ENCODE measurements at regions of chr3 and their contacts with region 1.

Region 1: GRCh38 chr3:141184430-141184829 is 47.2 kb upstream of the PXYLP1 start:
- DNase-seq: no peak
- H3K4me3 ChIP-seq: no peak overlapping the region
- H3K27ac ChIP-seq: no peak overlapping the region
- H3K4me1 ChIP-seq: no peaks in the 10 kb centered on the region
- H3K27me3 ChIP-seq: no peaks in the 10 kb centered on the region
- CTCF ChIP-seq: no peak
- POLR2A ChIP-seq: no peak

Region 2: DNA sequence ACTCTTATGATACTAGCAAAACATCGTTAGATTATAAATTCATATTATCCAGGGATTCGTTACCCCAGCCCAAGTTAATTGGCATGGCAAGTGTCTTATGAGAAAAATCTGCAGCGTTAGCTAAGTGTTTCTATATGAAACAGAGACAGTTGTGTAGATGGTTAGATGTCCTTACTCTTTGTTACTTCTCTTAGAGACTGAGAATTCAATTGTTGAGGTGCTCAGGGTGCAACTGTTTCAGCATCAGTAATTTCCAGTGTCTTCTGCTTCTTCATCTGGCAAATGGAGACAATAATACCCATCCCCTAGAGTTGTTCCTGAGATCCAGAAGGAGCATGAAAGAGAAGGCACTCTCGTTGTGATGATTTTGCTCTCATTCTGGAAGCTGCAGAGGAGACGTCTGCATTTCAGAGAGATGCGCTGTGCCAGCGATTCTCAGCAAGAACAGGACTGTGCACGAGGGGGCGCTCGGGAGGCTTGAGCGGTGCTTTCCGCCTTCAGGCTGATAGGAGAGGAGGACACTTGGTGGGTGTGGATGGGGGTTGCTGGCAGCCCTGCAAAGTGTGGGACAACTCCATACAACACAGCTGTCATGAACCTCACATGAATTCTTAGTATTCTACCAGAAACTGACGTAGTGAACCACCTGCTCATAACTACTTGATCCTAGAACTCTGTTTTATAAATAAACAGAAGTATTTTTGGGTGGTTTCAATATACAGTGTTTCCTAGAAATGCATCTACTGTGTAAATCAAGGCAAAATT is 173.0 kb before region 1 on chr3:
- intact Hi-C with region 1: loop called (anchors 10 kb)
- DNase-seq: peak; percentile 66 to 68
- H3K4me3 ChIP-seq: no peak overlapping the region
- H3K27ac ChIP-seq: no peak overlapping the region
- H3K4me1 ChIP-seq: no peaks in the 10 kb centered on the region
- H3K27me3 ChIP-seq: no peaks in the 10 kb centered on the region
- CTCF ChIP-seq: peak; percentile 16 to 72 (median 36)
- POLR2A ChIP-seq: no peak

Region 3: DNA sequence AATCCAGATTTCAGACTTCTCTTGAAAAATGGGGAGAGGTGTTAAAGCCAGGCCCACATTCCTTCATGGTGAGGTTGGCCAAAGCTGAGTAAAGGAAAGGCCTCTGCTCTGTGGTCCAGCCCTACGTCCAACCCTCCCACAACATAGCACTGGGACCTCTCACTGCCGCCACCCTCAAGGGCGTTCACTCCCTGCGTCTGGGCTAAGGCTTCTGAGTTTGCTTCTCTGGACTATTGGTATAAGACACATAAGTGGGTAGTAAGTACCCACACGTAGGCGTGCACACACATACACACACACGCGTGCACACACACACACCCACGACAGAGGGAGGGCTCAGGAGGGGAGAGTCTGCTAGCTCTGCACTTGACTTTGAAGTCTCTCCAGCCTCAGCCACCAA is 33.0 kb before region 1 on chr3:
- intact Hi-C with region 1: no loop called
- DNase-seq: no peak
- H3K4me3 ChIP-seq: no peak overlapping the region
- H3K27ac ChIP-seq: no peak overlapping the region
- H3K4me1 ChIP-seq: no peaks in the 10 kb centered on the region
- H3K27me3 ChIP-seq: no peaks in the 10 kb centered on the region
- CTCF ChIP-seq: no peak
- POLR2A ChIP-seq: no peak

Measured in thyroid gland (tissue), 4 donors.